Cardiac septum (tissue), 1 donor: ENCODE measurements at regions of chr4 and their contacts with region 1.

Region 1: DNA sequence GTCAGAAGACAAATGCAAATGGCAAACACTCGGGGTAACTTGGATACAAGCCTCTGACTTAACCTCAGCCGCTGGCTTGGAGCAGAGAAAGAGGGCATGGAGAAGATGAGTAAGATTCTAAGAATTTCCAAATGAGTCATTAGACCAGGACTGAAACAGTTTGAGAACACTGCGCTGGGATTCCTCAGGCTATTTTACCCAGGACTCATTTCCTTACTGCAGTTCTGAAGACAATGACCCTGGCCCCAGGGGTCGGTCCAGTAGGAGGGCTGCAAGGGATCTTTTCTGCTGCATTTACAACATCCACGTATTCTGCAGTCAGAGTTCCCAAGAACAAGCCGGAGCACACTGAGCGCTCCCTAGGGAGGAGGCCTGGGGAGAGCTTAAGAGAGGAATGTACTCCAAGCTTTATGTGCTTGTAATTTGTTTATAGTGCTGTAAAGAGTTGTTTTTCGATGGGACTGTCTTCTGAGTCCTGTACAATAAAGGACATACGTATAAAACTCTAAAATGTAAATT is 27.3 kb upstream of the SORBS2 start:
- DNase-seq: no peak

Region 2: DNA sequence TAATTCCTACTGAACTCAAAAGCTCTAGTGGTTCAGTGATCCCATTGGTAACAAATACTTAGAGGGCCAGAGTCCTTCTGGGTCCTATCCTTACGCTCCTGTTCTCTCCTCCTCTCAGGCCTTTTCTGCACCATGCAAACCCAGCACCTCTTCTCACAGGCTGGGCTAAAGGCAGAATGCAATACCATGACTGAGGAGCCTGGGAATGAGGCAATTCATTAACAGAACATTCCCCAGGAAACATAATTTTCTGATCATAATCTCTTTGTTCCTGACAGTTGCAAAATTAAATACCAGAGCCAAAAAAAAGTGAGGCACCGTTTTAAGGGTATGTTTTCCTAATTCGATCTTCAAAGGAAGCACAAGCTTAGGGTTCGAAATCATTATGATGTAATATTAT is 36.2 kb before region 1 on chr4:
- intact Hi-C with region 1: loop called (anchors 2 kb)
- DNase-seq: no peak